ENCODE measurements at regions of chr17 and their contacts with region 1.

Region 1: DNA sequence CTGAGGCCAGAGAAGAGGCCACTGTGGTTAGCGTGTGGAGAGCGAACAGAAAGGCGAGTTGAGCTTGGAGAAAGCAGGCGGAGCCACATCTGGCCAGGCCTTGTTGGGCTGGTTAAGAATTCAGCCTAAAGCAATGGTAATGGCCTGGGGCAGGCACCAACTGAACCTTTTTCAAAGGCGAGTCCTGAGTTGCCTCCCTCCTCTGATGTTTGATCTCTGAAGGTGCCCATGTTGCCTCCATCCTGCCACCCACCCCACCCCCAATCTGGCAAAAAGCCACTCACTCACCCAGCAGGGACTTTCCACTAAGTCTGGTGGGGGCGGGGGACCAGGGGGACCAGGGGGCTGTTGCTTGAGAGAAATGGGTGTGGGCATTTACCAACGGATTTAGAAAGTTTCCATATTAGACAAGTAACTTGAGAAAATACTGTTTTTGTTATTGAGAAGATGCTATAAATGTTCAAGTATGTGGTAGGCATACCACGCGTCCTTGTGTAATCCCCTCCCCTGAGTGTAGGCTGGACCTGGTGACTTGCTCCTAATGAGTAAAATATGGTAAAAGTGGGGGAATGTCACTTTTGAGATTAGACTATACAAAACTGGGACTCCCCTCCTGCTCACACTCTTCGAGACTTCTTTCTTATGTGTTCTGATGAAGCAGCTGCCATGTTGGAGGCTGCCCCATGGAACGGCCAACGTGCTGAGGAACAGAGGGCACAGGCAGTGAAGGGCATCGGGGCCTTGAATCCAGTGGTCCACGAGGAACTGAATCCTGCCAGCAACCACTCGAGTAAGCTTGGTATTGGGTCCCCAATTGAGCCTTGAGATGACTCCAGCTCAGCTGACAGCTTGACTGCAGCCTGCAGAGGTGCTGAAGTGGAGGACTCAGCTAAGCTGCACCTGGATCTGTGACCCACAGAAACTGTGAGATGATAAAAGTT is 29.9 kb upstream of the TNS4 start:
- DNase-seq: peak in 13 of 14 experiments; percentile 51 to 84 (median 72)
- ATAC-seq: no peak
- H3K4me3 ChIP-seq: no peak overlapping the region
- H3K4me3 Mint-ChIP-seq: peak overlapping the region; percentile 8
- H3K27ac ChIP-seq: no peak overlapping the region
- H3K27ac Mint-ChIP-seq: peak overlapping the region; percentile 98
- H3K4me1 ChIP-seq: peaks cover 71% of the 10 kb centered on the region
- H3K4me1 Mint-ChIP-seq: peaks cover 72% of the 10 kb centered on the region
- H3K27me3 ChIP-seq: no peaks in the 10 kb centered on the region
- H3K27me3 Mint-ChIP-seq: peaks cover 5% of the 10 kb centered on the region
- CTCF ChIP-seq: no peak

Region 2: DNA sequence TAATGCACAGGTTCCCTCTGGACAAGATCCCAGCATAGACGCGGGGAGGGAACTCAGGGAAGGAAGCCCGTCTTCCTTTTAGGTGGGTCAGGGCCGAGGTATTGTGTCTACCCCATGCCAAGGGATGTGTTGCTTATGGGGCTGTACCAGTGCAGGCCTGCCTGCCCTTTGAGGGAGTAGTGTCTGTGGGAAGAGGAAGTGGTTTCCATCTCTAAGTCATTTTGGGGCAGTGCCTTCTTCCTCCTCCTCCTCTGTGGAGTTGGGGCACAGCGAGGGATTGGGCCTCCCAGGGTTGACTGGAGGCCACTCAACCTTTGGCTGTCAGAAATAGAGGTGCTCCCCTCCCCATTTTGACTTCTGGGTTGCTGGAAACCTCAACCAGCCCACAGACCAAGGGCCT is 193.3 kb before region 1 on chr17:
- CTCF ChIA-PET with region 1: no interaction called
- POLR2A ChIA-PET with region 1: no interaction called
- intact Hi-C with region 1: no loop called
- DNase-seq: peak in 2 of 14 experiments; percentile 26 to 49
- ATAC-seq: no peak
- H3K4me3 ChIP-seq: no peak overlapping the region
- H3K4me3 Mint-ChIP-seq: no peak overlapping the region
- H3K27ac ChIP-seq: peak overlapping the region; percentile 53 to 55
- H3K27ac Mint-ChIP-seq: peak overlapping the region; percentile 93
- H3K4me1 ChIP-seq: peaks cover 83% of the 10 kb centered on the region
- H3K4me1 Mint-ChIP-seq: peaks cover 67% of the 10 kb centered on the region
- H3K27me3 ChIP-seq: no peaks in the 10 kb centered on the region
- H3K27me3 Mint-ChIP-seq: no peaks in the 10 kb centered on the region
- CTCF ChIP-seq: no peak

Region 3: DNA sequence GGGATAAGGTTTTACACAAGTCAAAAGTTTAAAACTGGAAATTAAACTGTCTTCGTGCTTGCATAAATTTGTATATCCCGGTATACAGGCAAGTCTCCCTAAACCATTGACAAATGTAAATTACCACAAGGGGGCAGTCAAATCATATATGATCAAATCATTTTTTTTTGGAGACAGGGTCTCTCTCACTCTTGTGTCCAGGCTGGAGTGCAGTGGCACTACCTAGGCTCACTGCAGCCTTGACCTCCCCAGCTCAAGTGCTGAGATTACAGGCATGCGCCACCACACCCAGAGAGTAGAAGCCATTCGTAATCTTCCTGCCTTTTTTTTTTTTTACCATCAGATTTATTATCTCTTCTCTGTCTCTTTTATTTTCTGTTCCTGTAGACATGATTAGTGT is 132.1 kb before region 1 on chr17:
- CTCF ChIA-PET with region 1: interaction called, 9 read pairs
- POLR2A ChIA-PET with region 1: interaction called, 15 read pairs
- intact Hi-C with region 1: loop called (anchors 1 kb)
- DNase-seq: peak in 5 of 14 experiments; percentile 7 to 80 (median 52)
- ATAC-seq: peak; percentile 71
- H3K4me3 ChIP-seq: no peak overlapping the region
- H3K4me3 Mint-ChIP-seq: no peak overlapping the region
- H3K27ac ChIP-seq: no peak overlapping the region
- H3K27ac Mint-ChIP-seq: no peak overlapping the region
- H3K4me1 ChIP-seq: peaks cover 3% of the 10 kb centered on the region
- H3K4me1 Mint-ChIP-seq: peaks cover 22% of the 10 kb centered on the region
- H3K27me3 ChIP-seq: no peaks in the 10 kb centered on the region
- H3K27me3 Mint-ChIP-seq: no peaks in the 10 kb centered on the region
- CTCF ChIP-seq: peak; percentile 91

Region 4: DNA sequence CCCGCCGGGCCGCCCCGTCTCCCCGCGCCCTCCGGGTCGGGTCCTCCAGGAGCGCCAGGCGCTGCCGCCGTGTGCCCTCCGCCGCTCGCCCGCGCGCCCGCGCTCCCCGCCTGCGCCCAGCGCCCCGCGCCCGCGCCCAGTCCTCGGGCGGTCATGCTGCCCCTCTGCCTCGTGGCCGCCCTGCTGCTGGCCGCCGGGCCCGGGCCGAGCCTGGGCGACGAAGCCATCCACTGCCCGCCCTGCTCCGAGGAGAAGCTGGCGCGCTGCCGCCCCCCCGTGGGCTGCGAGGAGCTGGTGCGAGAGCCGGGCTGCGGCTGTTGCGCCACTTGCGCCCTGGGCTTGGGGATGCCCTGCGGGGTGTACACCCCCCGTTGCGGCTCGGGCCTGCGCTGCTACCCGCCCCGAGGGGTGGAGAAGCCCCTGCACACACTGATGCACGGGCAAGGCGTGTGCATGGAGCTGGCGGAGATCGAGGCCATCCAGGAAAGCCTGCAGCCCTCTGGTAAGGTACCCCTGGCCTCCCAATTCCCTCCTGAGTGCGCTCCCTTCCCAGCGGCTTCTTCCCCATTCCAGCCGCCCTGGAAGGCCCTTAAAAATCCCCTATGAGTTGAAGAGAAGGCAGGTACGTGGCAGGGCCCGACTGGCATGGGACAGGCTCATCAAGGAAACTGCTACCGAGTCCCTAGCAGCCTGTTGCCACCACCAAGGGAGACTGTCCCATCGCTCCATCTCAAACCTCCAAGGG is 87.6 kb before region 1 on chr17:
- CTCF ChIA-PET with region 1: interaction called, 14 read pairs
- POLR2A ChIA-PET with region 1: interaction called, 36 read pairs
- intact Hi-C with region 1: loop called (anchors 2 to 5 kb)
- DNase-seq: peak; percentile 41 to 84 (median 66)
- ATAC-seq: peak; percentile 76
- H3K4me3 ChIP-seq: peak overlapping the region; percentile 62
- H3K4me3 Mint-ChIP-seq: peak overlapping the region; percentile 89
- H3K27ac ChIP-seq: no peak overlapping the region
- H3K27ac Mint-ChIP-seq: peak overlapping the region; percentile 85
- H3K4me1 ChIP-seq: peaks cover 46% of the 10 kb centered on the region
- H3K4me1 Mint-ChIP-seq: peaks cover 37% of the 10 kb centered on the region
- H3K27me3 ChIP-seq: no peaks in the 10 kb centered on the region
- H3K27me3 Mint-ChIP-seq: peaks cover 6% of the 10 kb centered on the region
- CTCF ChIP-seq: peak; percentile 63

Region 5: GRCh38 chr17:40490289-40490853 is 41.0 kb before region 1 on chr17:
- CTCF ChIA-PET with region 1: interaction called, 5 read pairs
- POLR2A ChIA-PET with region 1: interaction called, 27 read pairs
- intact Hi-C with region 1: no loop called
- DNase-seq: peak in 4 of 14 experiments; percentile 11 to 48 (median 26)
- ATAC-seq: no peak
- H3K4me3 ChIP-seq: no peak overlapping the region
- H3K4me3 Mint-ChIP-seq: peak overlapping the region; percentile 48
- H3K27ac ChIP-seq: no peak overlapping the region
- H3K27ac Mint-ChIP-seq: peak overlapping the region; percentile 49
- H3K4me1 ChIP-seq: peaks cover 47% of the 10 kb centered on the region
- H3K4me1 Mint-ChIP-seq: peaks cover 62% of the 10 kb centered on the region
- H3K27me3 ChIP-seq: no peaks in the 10 kb centered on the region
- H3K27me3 Mint-ChIP-seq: no peaks in the 10 kb centered on the region
- CTCF ChIP-seq: no peak

Region 6: GRCh38 chr17:40559954-40560591 is 28.8 kb after region 1 on chr17:
- CTCF ChIA-PET with region 1: interaction called, 147 read pairs
- POLR2A ChIA-PET with region 1: interaction called, 668 read pairs
- intact Hi-C with region 1: loop called (anchors 1 to 2 kb)
- DNase-seq: peak; percentile 74 to 90 (median 80)
- ATAC-seq: peak; percentile 33
- H3K4me3 ChIP-seq: peak overlapping the region; percentile 97
- H3K4me3 Mint-ChIP-seq: peak overlapping the region; percentile 91
- H3K27ac ChIP-seq: peak overlapping the region; percentile 92 to 100
- H3K27ac Mint-ChIP-seq: peak overlapping the region; percentile 92
- H3K4me1 ChIP-seq: peaks cover 97% of the 10 kb centered on the region
- H3K4me1 Mint-ChIP-seq: peaks cover 90% of the 10 kb centered on the region
- H3K27me3 ChIP-seq: no peaks in the 10 kb centered on the region
- H3K27me3 Mint-ChIP-seq: no peaks in the 10 kb centered on the region
- CTCF ChIP-seq: peak; percentile 97

Measured in CD4-positive, alpha-beta T cell (primary cell).